ENCODE measurements at regions of chr2 and their contacts with region 1.

Region 1: GRCh38 chr2:136191041-136191440 is 73.1 kb upstream of the CXCR4 start:
- DNase-seq: no peak
- ATAC-seq: no peak
- H3K4me3 ChIP-seq: no peak overlapping the region
- H3K4me3 Mint-ChIP-seq: no peak overlapping the region
- H3K27ac ChIP-seq: no peak overlapping the region
- H3K27ac Mint-ChIP-seq: no peak overlapping the region
- H3K4me1 ChIP-seq: no peaks in the 10 kb centered on the region
- H3K4me1 Mint-ChIP-seq: peaks cover 3% of the 10 kb centered on the region
- H3K27me3 ChIP-seq: no peaks in the 10 kb centered on the region
- H3K27me3 Mint-ChIP-seq: no peaks in the 10 kb centered on the region
- CTCF ChIP-seq: no peak

Region 2: GRCh38 chr2:136154402-136154783 is 36.6 kb before region 1 on chr2:
- CTCF ChIA-PET with region 1: no interaction called
- POLR2A ChIA-PET with region 1: no interaction called
- intact Hi-C with region 1: loop called in 1 of 2 experiments (anchors 5 kb)
- DNase-seq: no peak
- ATAC-seq: no peak
- H3K4me3 ChIP-seq: no peak overlapping the region
- H3K4me3 Mint-ChIP-seq: no peak overlapping the region
- H3K27ac ChIP-seq: no peak overlapping the region
- H3K27ac Mint-ChIP-seq: no peak overlapping the region
- H3K4me1 ChIP-seq: no peaks in the 10 kb centered on the region
- H3K4me1 Mint-ChIP-seq: peaks cover 22% of the 10 kb centered on the region
- H3K27me3 ChIP-seq: no peaks in the 10 kb centered on the region
- H3K27me3 Mint-ChIP-seq: no peaks in the 10 kb centered on the region
- CTCF ChIP-seq: no peak